ENCODE measurements at regions of chr19 and their contacts with region 1.

Region 1: GRCh38 chr19:41706741-41707501 is 1.5 kb upstream of the CEACAM5 start:
- DNase-seq: peak; percentile 87
- H3K4me3 Mint-ChIP-seq: peak overlapping the region; percentile 77
- H3K27ac Mint-ChIP-seq: no peak overlapping the region
- H3K4me1 Mint-ChIP-seq: peaks cover 13% of the 10 kb centered on the region
- H3K27me3 Mint-ChIP-seq: peaks cover 62% of the 10 kb centered on the region
- CTCF ChIP-seq: peak; percentile 100

Region 2: GRCh38 chr19:41641879-41642485 is 64.9 kb before region 1 on chr19:
- CTCF ChIA-PET with region 1: interaction called, 22 read pairs
- intact Hi-C with region 1: no loop called
- DNase-seq: peak; percentile 88
- H3K4me3 Mint-ChIP-seq: no peak overlapping the region
- H3K27ac Mint-ChIP-seq: no peak overlapping the region
- H3K4me1 Mint-ChIP-seq: no peaks in the 10 kb centered on the region
- H3K27me3 Mint-ChIP-seq: peaks cover 61% of the 10 kb centered on the region
- CTCF ChIP-seq: peak; percentile 95

Region 3: GRCh38 chr19:41696402-41697197 is 10.3 kb before region 1 on chr19:
- CTCF ChIA-PET with region 1: interaction called, 20 read pairs
- intact Hi-C with region 1: no loop called
- DNase-seq: peak; percentile 46
- H3K4me3 Mint-ChIP-seq: no peak overlapping the region
- H3K27ac Mint-ChIP-seq: no peak overlapping the region
- H3K4me1 Mint-ChIP-seq: peaks cover 30% of the 10 kb centered on the region
- H3K27me3 Mint-ChIP-seq: peaks cover 18% of the 10 kb centered on the region
- CTCF ChIP-seq: no peak

Region 4: DNA sequence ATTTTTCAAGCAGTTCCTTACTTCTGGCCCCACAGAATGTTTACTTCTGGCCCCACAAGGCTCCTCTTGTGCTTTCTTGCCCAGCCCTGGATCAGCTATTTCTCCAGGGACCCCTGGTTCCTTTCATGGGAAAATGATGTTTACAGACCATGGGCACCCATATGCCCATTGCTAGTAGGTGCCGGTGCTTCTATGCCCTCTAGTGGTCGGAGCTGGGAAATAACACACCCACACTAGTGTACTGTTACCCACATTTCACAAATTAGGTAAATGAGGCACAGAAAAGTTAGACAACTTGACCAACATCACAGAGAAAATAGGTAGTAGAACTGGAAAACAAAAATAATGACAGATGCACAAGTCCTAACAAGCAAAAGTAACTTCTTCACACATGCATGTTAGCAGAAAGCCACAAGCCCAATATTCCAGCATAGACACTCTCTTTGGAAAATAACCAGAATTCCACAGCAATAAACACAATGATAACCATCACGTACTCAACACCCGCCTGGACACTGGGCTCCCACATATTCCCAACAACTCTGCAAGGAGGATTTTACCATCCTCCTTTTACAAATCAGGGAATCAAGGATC is 47.1 kb after region 1 on chr19:
- CTCF ChIA-PET with region 1: interaction called, 29 read pairs
- intact Hi-C with region 1: no loop called
- DNase-seq: peak; percentile 76
- H3K4me3 Mint-ChIP-seq: no peak overlapping the region
- H3K27ac Mint-ChIP-seq: peak overlapping the region; percentile 19
- H3K4me1 Mint-ChIP-seq: peaks cover 71% of the 10 kb centered on the region
- H3K27me3 Mint-ChIP-seq: peaks cover 1% of the 10 kb centered on the region
- CTCF ChIP-seq: peak; percentile 56

Region 5: GRCh38 chr19:41795031-41795461 is 88.1 kb after region 1 on chr19:
- CTCF ChIA-PET with region 1: interaction called, 14 read pairs
- intact Hi-C with region 1: no loop called
- DNase-seq: peak; percentile 76
- H3K4me3 Mint-ChIP-seq: no peak overlapping the region
- H3K27ac Mint-ChIP-seq: no peak overlapping the region
- H3K4me1 Mint-ChIP-seq: peaks cover 37% of the 10 kb centered on the region
- H3K27me3 Mint-ChIP-seq: peaks cover 31% of the 10 kb centered on the region
- CTCF ChIP-seq: peak; percentile 98

Region 6: GRCh38 chr19:42396381-42397262 is 689.7 kb after region 1 on chr19:
- CTCF ChIA-PET with region 1: no interaction called
- intact Hi-C with region 1: no loop called
- DNase-seq: peak; percentile 100
- H3K4me3 Mint-ChIP-seq: peak overlapping the region; percentile 86
- H3K27ac Mint-ChIP-seq: peak overlapping the region; percentile 90
- H3K4me1 Mint-ChIP-seq: peaks cover 29% of the 10 kb centered on the region
- H3K27me3 Mint-ChIP-seq: peaks cover 21% of the 10 kb centered on the region
- CTCF ChIP-seq: no peak